Lower leg skin (tissue), 4 donors: ENCODE measurements at regions of chr21 and their contacts with region 1.

Region 1: DNA sequence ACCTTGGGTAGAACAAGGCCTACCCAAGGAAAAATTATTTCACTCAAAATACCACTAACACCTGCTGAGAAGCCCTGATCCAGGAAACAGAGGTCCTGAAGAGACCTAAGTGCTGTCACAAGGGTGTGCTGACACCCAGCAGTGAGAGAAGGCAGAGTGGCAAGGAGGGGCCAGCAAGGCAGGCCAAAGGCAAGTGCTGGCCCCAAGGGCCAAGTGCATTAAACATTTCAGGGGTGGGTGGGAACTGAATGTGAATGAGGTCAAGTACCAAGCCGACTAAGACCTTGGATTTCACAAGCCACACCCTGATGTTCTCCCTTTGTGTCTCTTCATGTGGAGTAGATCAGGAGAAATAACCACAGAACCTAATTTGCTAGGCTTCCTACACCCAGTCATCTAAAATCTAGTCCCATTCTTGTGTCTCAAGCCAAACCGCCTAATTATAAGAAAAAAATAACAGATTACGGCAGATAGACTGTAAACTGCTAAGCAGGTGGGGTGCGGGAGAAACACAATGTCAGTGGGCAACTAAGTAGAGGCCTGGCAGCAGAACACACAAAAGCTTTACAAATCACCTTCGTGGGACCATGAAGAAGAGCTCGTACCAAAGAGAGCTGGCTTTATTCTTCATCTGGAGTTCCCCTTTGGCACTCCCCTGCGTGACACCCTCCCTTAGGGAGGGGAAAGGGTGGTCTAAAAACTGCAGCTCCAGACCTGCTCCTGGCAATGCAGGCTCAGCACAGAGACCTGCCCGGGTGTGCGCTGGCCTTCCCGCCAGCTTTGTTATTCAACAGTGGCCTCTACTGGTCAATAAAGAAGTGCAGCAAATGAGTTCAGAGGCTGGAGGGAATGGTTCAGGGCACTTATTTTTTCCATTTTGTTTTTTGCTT is 8.7 kb downstream of the UBE2G2 start:
- DNase-seq: no peak
- H3K4me3 ChIP-seq: no peak overlapping the region
- CTCF ChIP-seq: peak in 1 of 3 donors; percentile 45
- POLR2A ChIP-seq: no peak

Region 2: DNA sequence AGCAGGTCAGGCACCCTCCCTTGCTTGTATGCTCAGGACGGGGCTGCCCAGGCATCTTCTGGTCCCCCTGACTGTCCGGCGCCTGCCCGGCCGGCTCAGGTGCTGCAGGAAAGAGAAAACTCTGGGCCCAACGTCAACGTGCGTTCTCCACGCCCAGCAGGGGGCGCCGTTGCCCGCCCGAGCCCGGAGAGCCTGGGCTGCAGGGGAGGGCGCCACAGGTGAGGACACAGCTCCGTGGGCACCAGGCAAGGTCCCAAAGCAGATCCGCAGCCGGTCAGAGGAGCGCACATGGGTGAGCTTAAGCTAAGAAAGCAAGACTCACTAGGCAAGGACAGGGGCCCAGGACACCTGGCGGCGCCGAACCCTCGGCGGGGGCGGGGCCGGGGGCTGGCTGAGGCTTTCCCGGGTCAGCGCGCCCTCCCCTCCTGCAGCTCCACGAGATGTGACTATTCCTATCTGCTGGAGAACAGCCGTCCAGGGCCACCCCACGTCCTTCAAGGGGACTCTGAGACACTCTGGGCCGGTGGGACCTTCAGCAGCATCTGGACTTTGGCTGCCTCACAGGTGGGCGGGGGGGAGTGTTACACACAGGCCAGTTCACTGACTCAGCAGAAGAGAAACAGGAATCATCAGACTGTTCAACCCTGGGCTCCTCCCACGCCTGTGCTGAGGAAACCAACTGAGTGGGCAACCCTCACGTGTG is 282.3 kb before region 1 on chr21:
- intact Hi-C with region 1: loop called (anchors 5 kb)
- DNase-seq: no peak
- H3K4me3 ChIP-seq: no peak overlapping the region
- CTCF ChIP-seq: peak in 1 of 3 donors; percentile 27
- POLR2A ChIP-seq: no peak